IMR-90 (cell line): ENCODE measurements at regions of chr4 and their contacts with region 1.

Region 1: GRCh38 chr4:17447675-17448298 is 64.1 kb downstream of the QDPR start:
- DNase-seq: peak; percentile 81
- ATAC-seq: peak; percentile 93
- H3K4me3 ChIP-seq: no peak overlapping the region
- H3K27ac ChIP-seq: no peak overlapping the region
- H3K4me1 ChIP-seq: 0 out of 2 replicates have a peak, but pooled peaks cover 3% of the 10 kb centered on the region
- H3K27me3 ChIP-seq: peaks cover 2% of the 10 kb centered on the region; the same call in 1 of the 2 replicates
- CTCF ChIP-seq: peak; percentile 83
- POLR2A ChIP-seq: no peak
- RAD21 ChIP-seq: peak; percentile 86

Region 2: DNA sequence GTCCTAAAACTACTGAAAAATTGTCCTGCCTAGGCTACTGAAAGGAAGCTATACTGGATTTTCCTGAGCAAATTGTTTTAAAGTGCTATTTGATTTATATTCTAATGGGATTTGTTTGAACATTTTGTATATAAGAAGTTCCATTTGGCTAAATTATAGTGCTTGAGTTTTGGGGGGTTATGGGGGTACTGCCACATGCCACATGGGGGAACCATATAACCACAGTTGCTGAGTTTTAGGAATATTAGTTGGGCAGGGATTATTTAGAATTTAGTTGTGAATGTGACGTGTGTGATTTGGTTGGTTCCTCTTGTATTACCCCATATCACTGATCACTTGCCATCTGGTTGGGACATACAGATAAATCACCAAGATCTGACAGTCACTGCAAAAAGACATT is 997.1 kb before region 1 on chr4:
- CTCF ChIA-PET with region 1: no interaction called
- POLR2A ChIA-PET with region 1: no interaction called
- dilution Hi-C with region 1: no loop called
- in situ Hi-C with region 1: no loop called
- intact Hi-C with region 1: loop called (anchors 1 kb)
- DNase-seq: no peak
- ATAC-seq: no peak
- H3K4me3 ChIP-seq: no peak overlapping the region
- H3K27ac ChIP-seq: no peak overlapping the region
- H3K4me1 ChIP-seq: no peaks in the 10 kb centered on the region
- H3K27me3 ChIP-seq: peaks cover 12% of the 10 kb centered on the region
- CTCF ChIP-seq: peak; percentile 46
- POLR2A ChIP-seq: no peak
- RAD21 ChIP-seq: peak; percentile 60

Region 3: DNA sequence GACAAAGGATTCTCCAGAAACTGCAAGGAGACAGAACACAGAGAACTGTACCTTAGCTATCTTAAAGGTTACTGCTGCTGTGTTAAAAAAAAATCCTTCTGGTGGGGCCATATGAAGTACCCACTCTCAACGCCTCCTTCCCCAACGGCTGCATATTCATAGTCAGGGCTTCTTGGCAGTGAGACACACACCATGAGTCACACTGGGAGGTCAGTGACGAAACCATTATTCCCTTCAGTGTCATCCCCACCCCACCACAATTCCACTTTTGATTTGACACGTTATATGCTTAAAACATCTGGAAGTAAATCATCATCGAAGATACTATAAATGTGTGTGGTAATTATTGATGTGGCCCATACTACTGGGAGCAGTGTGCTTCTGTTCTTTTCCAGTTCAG is 820.8 kb before region 1 on chr4:
- CTCF ChIA-PET with region 1: no interaction called
- POLR2A ChIA-PET with region 1: no interaction called
- dilution Hi-C with region 1: no loop called
- in situ Hi-C with region 1: no loop called
- intact Hi-C with region 1: loop called (anchors 10 kb)
- DNase-seq: peak; percentile 98
- ATAC-seq: peak; percentile 86
- H3K4me3 ChIP-seq: no peak overlapping the region
- H3K27ac ChIP-seq: peak overlapping the region; percentile 77; the same call in 1 of the 2 replicates
- H3K4me1 ChIP-seq: peaks cover 20% of the 10 kb centered on the region
- H3K27me3 ChIP-seq: no peaks in the 10 kb centered on the region
- CTCF ChIP-seq: no peak
- POLR2A ChIP-seq: no peak
- RAD21 ChIP-seq: peak; percentile 12; the same call in 1 of the 2 replicates

Region 4: DNA sequence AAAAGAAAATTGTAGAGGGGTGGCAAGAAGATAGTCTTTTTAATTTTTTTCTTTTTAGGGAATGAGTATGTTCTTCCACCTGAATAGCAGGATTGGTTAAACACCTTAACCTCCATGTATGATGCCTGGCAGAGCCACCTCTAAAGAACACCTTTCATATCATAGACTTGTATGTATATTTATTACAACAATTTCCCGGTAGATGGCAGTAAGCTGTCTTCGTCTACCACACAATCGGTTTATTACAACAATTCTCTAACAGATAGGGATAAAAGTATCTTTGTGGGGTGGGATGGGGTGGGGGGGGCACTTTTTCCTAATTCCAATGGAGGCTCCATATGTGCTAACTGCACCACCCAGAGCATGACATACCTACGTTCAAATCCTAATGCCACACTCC is 804.9 kb before region 1 on chr4:
- CTCF ChIA-PET with region 1: no interaction called
- POLR2A ChIA-PET with region 1: no interaction called
- dilution Hi-C with region 1: no loop called
- in situ Hi-C with region 1: no loop called
- intact Hi-C with region 1: loop called (anchors 5 kb)
- DNase-seq: no peak
- ATAC-seq: no peak; the same call in 1 of the 2 replicates
- H3K4me3 ChIP-seq: no peak overlapping the region
- H3K27ac ChIP-seq: no peak overlapping the region
- H3K4me1 ChIP-seq: no peaks in the 10 kb centered on the region
- H3K27me3 ChIP-seq: no peaks in the 10 kb centered on the region
- CTCF ChIP-seq: 0 out of 2 replicates have a peak, but pooled peaks have one; percentile 26
- POLR2A ChIP-seq: no peak
- RAD21 ChIP-seq: peak; percentile 36; the same call in 1 of the 2 replicates

Region 5: GRCh38 chr4:16794816-16795445 is 652.9 kb before region 1 on chr4:
- CTCF ChIA-PET with region 1: interaction called, 3 read pairs
- POLR2A ChIA-PET with region 1: no interaction called
- dilution Hi-C with region 1: no loop called
- in situ Hi-C with region 1: loop called (anchors 25 kb)
- intact Hi-C with region 1: loop called (anchors 5 kb)
- DNase-seq: peak; percentile 60
- ATAC-seq: peak; percentile 80
- H3K4me3 ChIP-seq: no peak overlapping the region
- H3K27ac ChIP-seq: no peak overlapping the region
- H3K4me1 ChIP-seq: no peaks in the 10 kb centered on the region
- H3K27me3 ChIP-seq: no peaks in the 10 kb centered on the region
- CTCF ChIP-seq: peak; percentile 84
- POLR2A ChIP-seq: no peak
- RAD21 ChIP-seq: peak; percentile 91

Region 6: GRCh38 chr4:17347445-17347844 is 100.3 kb before region 1 on chr4:
- CTCF ChIA-PET with region 1: interaction called, 3 read pairs
- POLR2A ChIA-PET with region 1: no interaction called
- dilution Hi-C with region 1: no loop called
- in situ Hi-C with region 1: no loop called
- intact Hi-C with region 1: loop called (anchors 1 kb)
- DNase-seq: peak; percentile 19
- ATAC-seq: peak; percentile 53
- H3K4me3 ChIP-seq: no peak overlapping the region
- H3K27ac ChIP-seq: no peak overlapping the region
- H3K4me1 ChIP-seq: no peaks in the 10 kb centered on the region
- H3K27me3 ChIP-seq: peaks cover 2% of the 10 kb centered on the region; the same call in 1 of the 2 replicates
- CTCF ChIP-seq: peak; percentile 53
- POLR2A ChIP-seq: no peak
- RAD21 ChIP-seq: peak; percentile 53

Region 7: GRCh38 chr4:17400686-17401085 is 47.1 kb before region 1 on chr4:
- CTCF ChIA-PET with region 1: no interaction called
- POLR2A ChIA-PET with region 1: no interaction called
- dilution Hi-C with region 1: no loop called
- in situ Hi-C with region 1: no loop called
- intact Hi-C with region 1: no loop called
- DNase-seq: no peak
- ATAC-seq: no peak
- H3K4me3 ChIP-seq: no peak overlapping the region
- H3K27ac ChIP-seq: no peak overlapping the region
- H3K4me1 ChIP-seq: no peaks in the 10 kb centered on the region
- H3K27me3 ChIP-seq: peaks cover 5% of the 10 kb centered on the region
- CTCF ChIP-seq: no peak
- POLR2A ChIP-seq: no peak
- RAD21 ChIP-seq: no peak